ENCODE measurements at regions of chr5 and their contacts with region 1.

Region 1: DNA sequence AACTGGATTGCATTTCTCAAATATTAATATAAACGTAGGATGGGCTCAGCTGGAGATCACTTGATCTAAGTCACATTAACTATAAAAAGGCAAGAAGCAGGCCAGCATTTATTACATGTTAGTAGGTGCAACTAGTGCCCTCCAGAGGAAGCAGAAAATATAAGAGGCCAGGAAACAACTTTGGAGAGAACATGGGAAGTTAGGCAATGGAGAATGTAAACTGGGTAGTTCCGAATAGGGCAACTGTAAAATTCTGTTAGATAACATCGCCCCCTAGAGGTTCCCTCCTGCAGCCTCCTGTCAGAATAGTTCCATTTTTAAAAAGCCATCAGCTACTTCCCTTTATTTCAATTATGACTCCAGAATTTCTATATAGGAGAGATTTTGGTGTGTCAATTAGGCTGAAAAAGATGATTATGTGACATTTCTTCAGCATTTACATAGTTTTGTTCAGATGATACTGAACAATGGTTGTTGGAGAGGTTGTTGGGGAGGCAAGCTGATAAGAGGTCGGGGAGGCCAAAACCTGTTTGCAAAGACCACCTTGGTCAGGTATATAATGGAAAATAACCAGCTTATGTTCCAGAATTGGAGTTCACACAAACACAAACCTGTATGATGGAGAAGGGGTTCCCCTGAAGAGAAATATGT is 22.4 kb downstream of the CCL28 start:
- DNase-seq: peak; percentile 63
- ATAC-seq: peak; percentile 85
- H3K4me3 Mint-ChIP-seq: no peak overlapping the region
- H3K27ac Mint-ChIP-seq: no peak overlapping the region
- H3K4me1 Mint-ChIP-seq: peaks cover 32% of the 10 kb centered on the region
- H3K27me3 Mint-ChIP-seq: no peaks in the 10 kb centered on the region

Region 2: GRCh38 chr5:42908509-42909488 is 481.0 kb before region 1 on chr5:
- CTCF ChIA-PET with region 1: interaction called, 7 read pairs
- POLR2A ChIA-PET with region 1: no interaction called
- intact Hi-C with region 1: loop called (anchors 2 to 5 kb)
- DNase-seq: peak; percentile 95
- ATAC-seq: peak; percentile 95
- H3K4me3 Mint-ChIP-seq: peak overlapping the region; percentile 75
- H3K27ac Mint-ChIP-seq: peak overlapping the region; percentile 48
- H3K4me1 Mint-ChIP-seq: peaks cover 14% of the 10 kb centered on the region
- H3K27me3 Mint-ChIP-seq: peaks cover 8% of the 10 kb centered on the region

Region 3: GRCh38 chr5:43110606-43111442 is 279.0 kb before region 1 on chr5:
- CTCF ChIA-PET with region 1: interaction called, 30 read pairs
- POLR2A ChIA-PET with region 1: interaction called, 8 read pairs
- intact Hi-C with region 1: no loop called
- DNase-seq: peak; percentile 63
- ATAC-seq: peak; percentile 57
- H3K4me3 Mint-ChIP-seq: peak overlapping the region; percentile 41
- H3K27ac Mint-ChIP-seq: peak overlapping the region; percentile 34
- H3K4me1 Mint-ChIP-seq: peaks cover 47% of the 10 kb centered on the region
- H3K27me3 Mint-ChIP-seq: no peaks in the 10 kb centered on the region

Region 4: GRCh38 chr5:43203373-43203772 is 186.4 kb before region 1 on chr5:
- CTCF ChIA-PET with region 1: no interaction called
- POLR2A ChIA-PET with region 1: no interaction called
- intact Hi-C with region 1: no loop called
- DNase-seq: no peak
- ATAC-seq: no peak
- H3K4me3 Mint-ChIP-seq: no peak overlapping the region
- H3K27ac Mint-ChIP-seq: no peak overlapping the region
- H3K4me1 Mint-ChIP-seq: no peaks in the 10 kb centered on the region
- H3K27me3 Mint-ChIP-seq: peaks cover 9% of the 10 kb centered on the region

Region 5: DNA sequence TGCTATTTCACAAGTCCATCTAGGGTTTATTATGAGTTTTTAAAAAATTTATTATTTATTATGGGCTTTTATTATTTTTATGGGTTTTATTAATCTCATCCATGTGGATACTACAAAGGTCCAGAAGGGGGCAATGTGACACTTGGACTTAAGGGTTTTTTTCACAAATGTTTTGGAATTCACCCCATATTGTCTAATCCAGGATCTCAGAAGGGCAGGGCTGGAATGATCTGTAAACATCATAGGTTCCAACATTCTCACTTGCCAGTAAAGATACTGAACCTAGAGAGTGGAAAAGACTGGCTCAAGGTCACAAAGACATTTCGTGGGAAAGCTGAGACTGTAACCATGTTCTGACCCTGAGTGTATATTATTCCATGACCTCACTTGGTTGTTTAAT is 162.1 kb before region 1 on chr5:
- CTCF ChIA-PET with region 1: interaction called, 13 read pairs
- POLR2A ChIA-PET with region 1: no interaction called
- intact Hi-C with region 1: loop called (anchors 1 kb)
- DNase-seq: no peak
- ATAC-seq: peak; percentile 26
- H3K4me3 Mint-ChIP-seq: no peak overlapping the region
- H3K27ac Mint-ChIP-seq: no peak overlapping the region
- H3K4me1 Mint-ChIP-seq: no peaks in the 10 kb centered on the region
- H3K27me3 Mint-ChIP-seq: no peaks in the 10 kb centered on the region

Region 6: DNA sequence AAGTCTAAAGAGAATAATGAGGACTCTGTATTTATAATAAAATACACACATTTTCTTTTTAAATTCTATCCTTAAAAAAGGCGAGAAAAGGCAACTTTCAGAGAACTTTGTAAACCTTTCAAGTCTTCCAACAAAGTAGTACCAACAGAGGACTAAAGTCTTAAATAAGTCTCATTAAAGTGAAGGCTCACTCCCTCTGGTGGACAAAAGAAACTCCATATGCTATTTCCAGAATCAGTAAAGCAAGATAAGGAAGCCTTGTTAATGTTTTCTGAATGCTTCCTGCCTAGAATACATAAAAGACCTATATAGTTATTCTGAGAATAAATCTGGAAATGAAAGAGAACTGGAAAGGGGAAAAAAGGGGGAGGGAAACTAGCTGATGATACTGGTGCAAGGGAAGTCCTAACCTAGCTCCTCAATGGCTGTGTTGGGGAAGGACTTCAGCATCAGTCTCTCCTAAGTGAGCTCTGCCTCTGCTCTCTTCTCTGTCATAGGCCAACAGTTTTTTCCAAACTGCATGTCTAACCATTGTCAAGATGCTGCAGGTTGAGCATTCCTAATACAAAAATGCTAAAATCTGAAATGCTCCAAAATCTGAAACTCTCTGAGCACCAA is 83.7 kb before region 1 on chr5:
- CTCF ChIA-PET with region 1: interaction called, 35 read pairs
- POLR2A ChIA-PET with region 1: no interaction called
- intact Hi-C with region 1: loop called in 1 of 2 experiments (anchors 1 kb)
- DNase-seq: no peak
- ATAC-seq: peak; percentile 37
- H3K4me3 Mint-ChIP-seq: peak overlapping the region; percentile 12
- H3K27ac Mint-ChIP-seq: peak overlapping the region; percentile 63
- H3K4me1 Mint-ChIP-seq: peaks cover 80% of the 10 kb centered on the region
- H3K27me3 Mint-ChIP-seq: no peaks in the 10 kb centered on the region

Region 7: DNA sequence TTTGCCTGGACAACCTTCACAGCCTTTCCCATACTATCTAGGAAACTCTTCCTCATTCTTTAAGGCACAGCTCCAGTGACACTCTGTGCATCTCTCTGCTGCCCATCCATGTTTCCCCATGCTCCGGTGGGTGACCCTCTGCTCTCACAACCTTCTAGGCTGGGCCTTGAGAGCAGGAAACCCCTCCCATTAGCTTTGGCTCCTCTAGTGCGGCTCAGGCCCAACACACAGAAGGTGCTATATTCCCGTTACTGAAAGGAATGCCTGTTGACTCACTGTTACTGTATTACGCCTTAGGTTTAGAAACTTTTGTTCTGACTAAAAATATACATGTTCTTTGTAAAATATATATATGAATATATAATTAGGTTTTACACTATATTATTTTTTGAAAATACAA is 30.4 kb after region 1 on chr5:
- CTCF ChIA-PET with region 1: no interaction called
- POLR2A ChIA-PET with region 1: no interaction called
- intact Hi-C with region 1: no loop called
- DNase-seq: no peak
- ATAC-seq: no peak
- H3K4me3 Mint-ChIP-seq: no peak overlapping the region
- H3K27ac Mint-ChIP-seq: no peak overlapping the region
- H3K4me1 Mint-ChIP-seq: peaks cover 2% of the 10 kb centered on the region
- H3K27me3 Mint-ChIP-seq: peaks cover 3% of the 10 kb centered on the region

Region 8: DNA sequence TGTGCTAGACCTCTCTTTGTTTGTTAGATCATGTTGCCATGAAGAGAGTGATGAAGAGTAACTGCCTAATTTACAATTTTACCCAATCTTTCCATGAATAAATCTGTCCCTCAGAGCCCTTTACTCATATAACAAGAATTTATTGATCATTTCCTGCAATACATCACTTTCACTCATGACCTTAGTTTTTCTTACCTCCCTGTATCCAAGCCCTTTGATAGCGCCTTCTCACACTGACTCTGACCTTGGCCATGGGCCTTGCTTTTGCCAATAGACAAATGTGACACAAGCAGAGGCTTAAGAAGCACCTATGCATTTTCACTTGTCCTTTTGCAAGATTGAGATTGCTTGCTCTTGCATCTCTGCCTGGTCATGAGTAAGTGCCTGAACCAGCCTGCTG is 501.3 kb after region 1 on chr5:
- CTCF ChIA-PET with region 1: no interaction called
- POLR2A ChIA-PET with region 1: no interaction called
- intact Hi-C with region 1: no loop called
- DNase-seq: no peak
- ATAC-seq: no peak
- H3K4me3 Mint-ChIP-seq: no peak overlapping the region
- H3K27ac Mint-ChIP-seq: no peak overlapping the region
- H3K4me1 Mint-ChIP-seq: no peaks in the 10 kb centered on the region
- H3K27me3 Mint-ChIP-seq: no peaks in the 10 kb centered on the region